ENCODE measurements at regions of chr19 and their contacts with region 1.

Region 1: DNA sequence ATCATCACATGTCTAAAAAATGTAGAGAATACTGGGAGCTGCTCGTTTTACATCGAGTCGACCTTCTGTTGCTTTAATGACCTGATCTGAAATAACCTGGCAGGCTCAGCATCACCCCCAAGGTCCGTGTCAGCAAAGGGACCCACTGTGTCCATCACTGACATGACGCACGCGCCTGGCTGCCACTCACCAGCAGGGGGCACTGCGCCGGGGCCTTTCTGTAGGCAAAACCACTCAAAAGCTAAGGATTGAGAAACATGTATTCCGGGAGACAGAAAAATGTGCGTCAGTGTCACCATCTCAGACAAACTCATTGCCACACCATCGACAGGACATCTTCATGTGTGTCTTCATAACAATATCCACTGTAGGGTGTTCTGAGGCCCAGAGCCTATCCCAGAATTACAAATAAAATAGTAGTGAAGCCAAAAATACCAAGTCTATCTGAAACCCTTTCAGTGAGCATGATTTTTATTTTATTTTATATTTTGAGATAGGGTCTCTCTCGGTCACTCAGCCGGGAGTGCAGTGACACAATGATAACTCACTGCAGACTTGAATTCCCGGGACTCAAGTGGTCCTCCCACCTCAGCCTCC is 130.3 kb upstream of the LSM14A start:
- DNase-seq: peak; percentile 71
- ATAC-seq: peak in 1 of 2 donors; percentile 34

Region 2: GRCh38 chr19:33947265-33947964 is 94.6 kb before region 1 on chr19:
- intact Hi-C with region 1: no loop called
- DNase-seq: no peak
- ATAC-seq: no peak

Region 3: GRCh38 chr19:34096020-34096915 is 54.2 kb after region 1 on chr19:
- intact Hi-C with region 1: loop called in 1 of 2 experiments (anchors 5 kb)
- DNase-seq: no peak
- ATAC-seq: peak in 1 of 2 donors; percentile 51

Region 4: DNA sequence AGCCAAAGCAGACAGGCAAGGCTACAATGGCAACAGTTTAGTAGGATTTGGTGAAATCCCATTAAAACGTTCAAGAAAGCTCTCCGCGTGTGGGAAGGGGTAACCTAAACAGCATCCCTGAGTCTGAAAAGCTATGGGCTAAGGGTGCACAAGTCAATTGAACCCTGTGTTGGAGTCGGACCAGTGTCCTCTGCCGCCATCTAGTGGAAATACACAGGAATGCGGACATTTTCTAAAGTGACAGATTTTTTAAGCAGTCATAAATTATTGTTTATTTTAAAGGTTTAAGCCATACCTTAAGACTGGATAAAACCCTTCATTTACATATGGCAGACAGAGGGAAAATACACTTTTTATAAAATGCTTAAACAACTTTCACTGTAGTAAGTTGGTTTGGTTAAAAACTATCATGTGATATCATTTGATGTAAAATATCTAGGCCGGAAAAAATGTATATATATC is 103.7 kb after region 1 on chr19:
- intact Hi-C with region 1: loop called in 1 of 2 experiments (anchors 10 kb)
- DNase-seq: peak; percentile 33
- ATAC-seq: peak; percentile 50 to 56

Measured in left cardiac atrium (tissue), 4 donors.